IMR-90 (cell line): ENCODE measurements at regions of chr14 and their contacts with region 1.

Region 1: DNA sequence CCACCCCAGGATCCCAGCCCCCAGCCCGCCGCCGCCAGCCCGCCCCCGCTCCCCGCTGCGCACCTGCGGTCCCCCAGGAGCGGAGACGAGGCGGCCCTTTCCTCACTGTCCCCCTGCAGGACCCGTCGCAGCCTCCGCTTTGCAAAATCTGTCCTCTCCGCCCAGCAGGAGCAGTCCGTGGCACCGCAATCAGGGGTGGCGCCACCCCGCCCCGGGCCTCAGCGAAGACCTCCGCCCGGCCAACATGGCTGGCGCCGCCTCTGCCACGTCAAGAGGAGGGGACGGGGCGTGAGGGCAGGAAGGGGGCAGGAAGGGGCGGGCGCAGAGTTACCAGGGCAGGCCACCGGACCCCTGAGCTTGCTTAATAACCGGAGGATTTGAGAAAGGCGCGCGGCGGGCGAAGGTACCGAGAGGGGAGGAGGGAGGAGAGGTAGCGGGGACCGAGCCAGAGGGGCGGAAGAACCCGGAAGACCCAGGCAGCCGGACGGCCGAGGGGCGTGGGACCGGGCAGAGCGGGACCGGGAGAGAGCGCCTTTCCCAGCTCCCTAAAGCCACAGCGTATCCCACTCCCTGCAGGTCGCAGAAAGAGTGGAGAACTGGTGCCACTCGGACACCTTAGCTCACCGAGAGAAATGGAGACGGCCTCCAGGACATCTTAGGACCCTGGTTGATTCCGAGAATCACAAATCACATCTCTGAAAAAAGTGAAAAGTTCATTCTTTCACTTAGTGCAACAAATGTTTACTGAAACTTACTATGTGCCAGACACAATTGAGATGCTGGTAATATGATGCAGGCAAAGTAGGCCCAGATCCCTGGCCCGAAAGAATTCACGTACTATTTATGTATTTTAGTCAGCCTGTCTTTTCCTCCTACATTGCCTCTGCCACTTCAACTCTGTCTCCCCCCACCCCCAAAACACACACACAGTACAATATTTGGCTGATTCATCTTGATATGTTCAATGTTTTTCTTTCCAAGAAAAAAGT is at the start of gene SEC23A:
- DNase-seq: peak; percentile 83
- ATAC-seq: peak; percentile 94
- H3K4me3 ChIP-seq: peak within 1 kb of the TSS; percentile 80
- H3K27ac ChIP-seq: peak within 1 kb of the TSS; percentile 83
- H3K4me1 ChIP-seq: no peaks in the 10 kb centered on the region
- H3K27me3 ChIP-seq: no peaks in the 10 kb centered on the region
- CTCF ChIP-seq: no peak
- POLR2A ChIP-seq: peak; percentile 91
- RAD21 ChIP-seq: no peak
- total RNA-seq, gene SEC23A: 417 and 609 TPM in 2 replicates

Region 2: GRCh38 chr14:39114073-39114838 is 11.0 kb after region 1 on chr14 and contains the start of gene GEMIN2:
- CTCF ChIA-PET with region 1: no interaction called
- POLR2A ChIA-PET with region 1: interaction called, 13 read pairs
- dilution Hi-C with region 1: no loop called
- in situ Hi-C with region 1: no loop called
- intact Hi-C with region 1: no loop called
- DNase-seq: peak; percentile 91
- ATAC-seq: peak; percentile 99
- H3K4me3 ChIP-seq: peak within 1 kb of the TSS; percentile 83
- H3K27ac ChIP-seq: peak within 1 kb of the TSS; percentile 47
- H3K4me1 ChIP-seq: 0 out of 2 replicates have a peak, but pooled peaks cover 1% of the 10 kb centered on the region
- H3K27me3 ChIP-seq: no peaks in the 10 kb centered on the region
- CTCF ChIP-seq: no peak
- POLR2A ChIP-seq: no peak; the same call in 1 of the 2 replicates
- RAD21 ChIP-seq: no peak
- total RNA-seq, gene GEMIN2: 10.6 and 12.8 TPM in 2 replicates

Region 3: GRCh38 chr14:39174560-39175444 is 71.5 kb after region 1 on chr14 and contains the start of gene PNN:
- CTCF ChIA-PET with region 1: no interaction called
- POLR2A ChIA-PET with region 1: interaction called, 7 read pairs
- dilution Hi-C with region 1: no loop called
- in situ Hi-C with region 1: no loop called
- intact Hi-C with region 1: loop called (anchors 2 kb)
- DNase-seq: peak; percentile 100
- ATAC-seq: peak; percentile 93
- H3K4me3 ChIP-seq: peak within 1 kb of the TSS; percentile 81
- H3K27ac ChIP-seq: peak within 1 kb of the TSS; percentile 96
- H3K4me1 ChIP-seq: no peaks in the 10 kb centered on the region; the same call in 1 of the 2 replicates
- H3K27me3 ChIP-seq: no peaks in the 10 kb centered on the region
- CTCF ChIP-seq: no peak
- POLR2A ChIP-seq: peak; percentile 97
- RAD21 ChIP-seq: no peak
- total RNA-seq, gene PNN: 14.9 and 23.6 TPM in 2 replicates

Region 4: DNA sequence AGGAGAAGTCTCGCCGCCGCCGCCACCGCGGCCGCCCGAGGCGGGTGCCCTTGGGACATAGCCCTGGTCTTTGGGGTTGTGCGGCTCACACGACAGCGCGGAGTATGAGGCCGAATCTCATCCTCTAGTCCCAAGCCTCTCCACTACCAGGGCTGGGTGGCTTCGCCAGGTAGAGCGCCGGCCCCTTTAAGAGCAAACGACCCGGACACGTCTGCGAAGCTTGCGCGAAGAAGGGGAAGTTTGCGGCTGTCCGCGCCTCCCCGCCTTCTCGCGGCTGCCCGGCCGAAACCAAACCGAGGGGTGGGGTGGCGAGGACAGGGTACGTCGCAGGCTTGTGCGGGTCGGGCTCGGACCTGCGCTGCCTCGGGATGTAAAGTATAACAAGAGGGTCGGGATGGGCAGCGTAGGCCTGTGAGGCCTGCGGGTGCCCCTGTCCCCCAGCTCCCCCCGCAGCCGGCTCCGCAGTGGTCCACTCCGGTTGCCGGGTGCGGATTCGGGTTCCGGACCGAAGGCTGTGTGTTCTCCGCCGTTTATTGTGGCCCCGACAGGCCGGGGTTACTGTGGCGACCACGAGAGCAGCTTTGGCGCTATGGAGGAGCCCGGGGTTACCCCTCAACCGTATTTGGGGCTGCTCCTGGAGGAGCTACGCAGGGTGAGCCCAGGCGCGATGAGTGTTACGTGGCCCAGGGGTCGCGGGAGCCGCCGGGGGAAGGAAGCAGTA is 163.8 kb after region 1 on chr14:
- CTCF ChIA-PET with region 1: no interaction called
- POLR2A ChIA-PET with region 1: no interaction called
- dilution Hi-C with region 1: no loop called
- in situ Hi-C with region 1: no loop called
- intact Hi-C with region 1: loop called (anchors 10 kb)
- DNase-seq: peak; percentile 81
- ATAC-seq: peak; percentile 95
- H3K4me3 ChIP-seq: peak overlapping the region; percentile 70
- H3K27ac ChIP-seq: peak overlapping the region; percentile 95
- H3K4me1 ChIP-seq: peaks cover 2% of the 10 kb centered on the region; the same call in 1 of the 2 replicates
- H3K27me3 ChIP-seq: no peaks in the 10 kb centered on the region
- CTCF ChIP-seq: no peak
- POLR2A ChIP-seq: peak; percentile 68
- RAD21 ChIP-seq: no peak; the same call in 1 of the 2 replicates

Region 5: GRCh38 chr14:39368261-39368959 is 265.1 kb after region 1 on chr14:
- CTCF ChIA-PET with region 1: no interaction called
- POLR2A ChIA-PET with region 1: no interaction called
- dilution Hi-C with region 1: no loop called
- in situ Hi-C with region 1: no loop called
- intact Hi-C with region 1: loop called (anchors 1 kb)
- DNase-seq: peak; percentile 78
- ATAC-seq: peak; percentile 89
- H3K4me3 ChIP-seq: no peak overlapping the region
- H3K27ac ChIP-seq: no peak overlapping the region
- H3K4me1 ChIP-seq: no peaks in the 10 kb centered on the region
- H3K27me3 ChIP-seq: no peaks in the 10 kb centered on the region
- CTCF ChIP-seq: peak; percentile 81
- POLR2A ChIP-seq: no peak
- RAD21 ChIP-seq: peak; percentile 82

Region 6: DNA sequence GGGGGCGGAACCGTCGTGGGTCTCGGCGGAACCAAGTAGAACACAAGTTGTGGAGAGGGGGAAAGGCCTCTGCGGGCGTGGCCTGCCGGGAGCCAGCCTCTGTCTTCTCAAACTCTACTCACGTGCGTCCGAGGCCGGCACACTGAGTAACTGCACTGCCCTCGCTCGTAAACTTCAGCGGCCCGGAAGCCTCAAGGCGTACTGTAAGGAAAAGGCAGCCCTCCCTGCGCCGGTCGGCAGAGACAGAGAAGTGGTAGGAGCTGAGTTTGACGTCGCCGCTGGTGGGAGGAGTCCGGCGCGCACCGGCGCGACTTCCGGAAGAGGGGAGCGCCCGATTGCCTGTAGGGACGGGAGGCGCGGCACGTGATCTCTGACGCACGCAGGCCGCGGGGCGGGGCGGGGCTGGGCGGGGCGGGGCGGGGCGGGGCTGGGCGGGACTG is 328.9 kb after region 1 on chr14 and contains the start of gene FBXO33:
- CTCF ChIA-PET with region 1: no interaction called
- POLR2A ChIA-PET with region 1: interaction called, 3 read pairs
- dilution Hi-C with region 1: no loop called
- in situ Hi-C with region 1: no loop called
- intact Hi-C with region 1: loop called (anchors 1 kb)
- DNase-seq: peak; percentile 96
- ATAC-seq: peak; percentile 90
- H3K4me3 ChIP-seq: peak within 1 kb of the TSS; percentile 86
- H3K27ac ChIP-seq: peak within 1 kb of the TSS; percentile 97
- H3K4me1 ChIP-seq: 0 out of 2 replicates have a peak, but pooled peaks cover 2% of the 10 kb centered on the region
- H3K27me3 ChIP-seq: no peaks in the 10 kb centered on the region
- CTCF ChIP-seq: no peak
- POLR2A ChIP-seq: no peak
- RAD21 ChIP-seq: no peak
- total RNA-seq, gene FBXO33: 10.0 and 16.1 TPM in 2 replicates